IMR-90 (cell line): ENCODE measurements at regions of chr1 and their contacts with region 1.

Region 1: GRCh38 chr1:86965012-86965826 is 50.8 kb downstream of the HS2ST1 start:
- DNase-seq: peak; percentile 54
- ATAC-seq: peak; percentile 85
- H3K4me3 ChIP-seq: no peak overlapping the region
- H3K27ac ChIP-seq: no peak overlapping the region
- H3K4me1 ChIP-seq: no peaks in the 10 kb centered on the region
- H3K27me3 ChIP-seq: no peaks in the 10 kb centered on the region
- CTCF ChIP-seq: peak; percentile 84
- POLR2A ChIP-seq: no peak
- RAD21 ChIP-seq: peak; percentile 82

Region 2: GRCh38 chr1:86395771-86396497 is 569.3 kb before region 1 on chr1 and contains the start of gene ODF2L:
- CTCF ChIA-PET with region 1: no interaction called
- POLR2A ChIA-PET with region 1: no interaction called
- dilution Hi-C with region 1: no loop called
- in situ Hi-C with region 1: loop called (anchors 25 kb)
- intact Hi-C with region 1: no loop called
- DNase-seq: peak; percentile 74
- ATAC-seq: peak; percentile 100
- H3K4me3 ChIP-seq: peak within 1 kb of the TSS; percentile 84
- H3K27ac ChIP-seq: peak within 1 kb of the TSS; percentile 88
- H3K4me1 ChIP-seq: peaks cover 2% of the 10 kb centered on the region; the same call in 1 of the 2 replicates
- H3K27me3 ChIP-seq: peaks cover 4% of the 10 kb centered on the region; the same call in 1 of the 2 replicates
- CTCF ChIP-seq: no peak
- POLR2A ChIP-seq: peak; percentile 78
- RAD21 ChIP-seq: no peak
- total RNA-seq, gene ODF2L: 10.4 and 20.0 TPM in 2 replicates

Region 3: DNA sequence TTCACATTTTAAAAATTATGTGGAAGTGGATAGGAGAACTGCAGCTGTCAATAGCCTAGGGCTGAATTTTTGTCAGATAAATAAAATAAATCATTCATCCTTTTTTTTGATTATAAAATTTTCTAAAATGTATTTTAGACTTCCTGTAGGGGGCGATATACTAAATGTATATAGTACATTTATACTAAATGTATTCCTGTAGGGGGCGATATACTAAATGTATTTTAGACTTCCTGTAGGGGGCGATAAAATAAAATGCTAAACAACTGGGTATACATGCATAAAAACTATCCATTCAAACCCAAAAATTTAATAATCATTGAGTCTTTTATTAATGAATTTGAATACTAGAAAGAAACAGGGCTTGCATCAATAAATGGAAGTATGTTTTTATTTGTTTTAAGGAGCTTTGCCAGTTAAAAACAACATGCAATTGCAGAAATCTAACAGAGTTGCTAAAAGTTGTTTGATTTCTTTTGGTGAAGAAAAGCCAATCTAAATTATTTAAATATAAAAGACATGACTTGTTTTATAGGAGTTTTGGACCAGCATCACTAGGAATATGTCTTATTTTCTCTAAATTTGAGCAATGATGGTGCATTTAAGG is 465.1 kb before region 1 on chr1:
- CTCF ChIA-PET with region 1: no interaction called
- POLR2A ChIA-PET with region 1: no interaction called
- dilution Hi-C with region 1: no loop called
- in situ Hi-C with region 1: no loop called
- intact Hi-C with region 1: loop called (anchors 10 kb)
- DNase-seq: peak; percentile 32
- ATAC-seq: no peak
- H3K4me3 ChIP-seq: no peak overlapping the region
- H3K27ac ChIP-seq: no peak overlapping the region
- H3K4me1 ChIP-seq: peaks cover 2% of the 10 kb centered on the region
- H3K27me3 ChIP-seq: peaks cover 10% of the 10 kb centered on the region
- CTCF ChIP-seq: peak; percentile 100; the same call in 1 of the 2 replicates
- POLR2A ChIP-seq: no peak
- RAD21 ChIP-seq: peak; percentile 24; the same call in 1 of the 2 replicates

Region 4: GRCh38 chr1:86779308-86780191 is 185.7 kb before region 1 on chr1:
- CTCF ChIA-PET with region 1: no interaction called
- POLR2A ChIA-PET with region 1: no interaction called
- dilution Hi-C with region 1: no loop called
- in situ Hi-C with region 1: no loop called
- intact Hi-C with region 1: loop called (anchors 2 kb)
- DNase-seq: peak; percentile 92
- ATAC-seq: peak; percentile 48
- H3K4me3 ChIP-seq: no peak overlapping the region
- H3K27ac ChIP-seq: peak overlapping the region; percentile 6; the same call in 1 of the 2 replicates
- H3K4me1 ChIP-seq: peaks cover 19% of the 10 kb centered on the region
- H3K27me3 ChIP-seq: no peaks in the 10 kb centered on the region
- CTCF ChIP-seq: no peak
- POLR2A ChIP-seq: no peak
- RAD21 ChIP-seq: no peak

Region 5: DNA sequence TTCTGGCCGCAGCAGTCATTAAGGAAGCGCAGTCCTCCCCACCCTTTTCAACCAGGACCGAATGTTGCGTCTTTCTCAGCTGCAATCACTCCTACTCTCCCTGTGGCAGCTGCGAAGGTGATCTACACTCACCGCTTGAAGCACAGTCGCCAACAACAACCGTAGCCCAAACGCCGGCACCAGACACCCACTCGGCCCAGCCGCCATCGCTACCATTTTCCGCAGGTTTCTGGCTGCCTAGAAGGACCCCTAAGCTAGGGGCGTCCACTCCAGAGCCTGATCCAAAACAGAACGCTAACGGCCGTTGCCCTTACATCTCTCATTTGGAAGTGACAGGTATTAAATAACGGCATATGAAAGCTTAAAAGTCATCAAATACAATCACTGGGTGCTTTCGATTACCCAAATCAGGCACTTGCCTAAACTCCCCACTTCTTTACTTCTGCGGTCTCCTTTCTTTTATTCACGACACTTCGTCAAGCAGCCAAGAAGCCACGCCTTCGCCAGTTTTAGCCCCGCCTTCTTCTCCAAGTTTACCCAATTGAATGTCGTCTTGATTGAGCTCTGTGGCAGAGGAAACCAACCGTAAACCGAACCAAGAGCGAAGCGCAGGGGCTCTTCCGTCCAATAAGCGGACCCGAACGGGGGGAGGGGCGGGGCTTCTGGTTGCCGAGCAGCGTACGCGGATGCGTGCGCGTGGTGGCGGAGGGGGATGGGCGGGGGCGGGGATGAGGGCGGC is 51.2 kb before region 1 on chr1 and contains the start of gene SELENOF:
- CTCF ChIA-PET with region 1: interaction called, 3 read pairs
- POLR2A ChIA-PET with region 1: no interaction called
- dilution Hi-C with region 1: no loop called
- in situ Hi-C with region 1: no loop called
- intact Hi-C with region 1: loop called (anchors 2 kb)
- DNase-seq: peak; percentile 100
- ATAC-seq: peak; percentile 94
- H3K4me3 ChIP-seq: peak within 1 kb of the TSS; percentile 85
- H3K27ac ChIP-seq: peak within 1 kb of the TSS; percentile 79
- H3K4me1 ChIP-seq: peaks cover 4% of the 10 kb centered on the region; the same call in 1 of the 2 replicates
- H3K27me3 ChIP-seq: no peaks in the 10 kb centered on the region
- CTCF ChIP-seq: no peak
- POLR2A ChIP-seq: peak; percentile 83
- RAD21 ChIP-seq: no peak
- total RNA-seq, gene SELENOF: 60.0 and 128 TPM in 2 replicates

Region 6: DNA sequence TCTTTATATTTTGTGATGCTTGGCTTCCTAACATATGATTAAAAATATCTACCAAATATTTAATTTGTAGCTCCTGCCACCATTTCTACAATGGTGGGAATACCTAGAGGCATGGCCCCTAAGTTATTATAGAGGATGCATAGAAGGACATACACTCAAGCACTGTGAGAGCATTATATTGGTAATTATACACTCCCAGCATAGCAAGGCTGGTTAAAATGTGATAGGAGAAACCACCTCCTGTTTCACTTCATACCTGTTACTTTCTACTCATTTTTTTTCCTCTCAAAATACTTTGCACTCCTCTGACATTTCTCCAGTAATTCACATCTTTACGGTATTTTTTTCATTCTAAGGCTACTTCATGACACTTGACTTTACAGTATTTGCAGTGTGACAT is 42.1 kb after region 1 on chr1:
- CTCF ChIA-PET with region 1: no interaction called
- POLR2A ChIA-PET with region 1: no interaction called
- dilution Hi-C with region 1: no loop called
- in situ Hi-C with region 1: no loop called
- intact Hi-C with region 1: no loop called
- DNase-seq: no peak
- ATAC-seq: no peak
- H3K4me3 ChIP-seq: no peak overlapping the region
- H3K27ac ChIP-seq: no peak overlapping the region
- H3K4me1 ChIP-seq: no peaks in the 10 kb centered on the region
- H3K27me3 ChIP-seq: no peaks in the 10 kb centered on the region
- CTCF ChIP-seq: no peak
- POLR2A ChIP-seq: no peak
- RAD21 ChIP-seq: no peak

Region 7: DNA sequence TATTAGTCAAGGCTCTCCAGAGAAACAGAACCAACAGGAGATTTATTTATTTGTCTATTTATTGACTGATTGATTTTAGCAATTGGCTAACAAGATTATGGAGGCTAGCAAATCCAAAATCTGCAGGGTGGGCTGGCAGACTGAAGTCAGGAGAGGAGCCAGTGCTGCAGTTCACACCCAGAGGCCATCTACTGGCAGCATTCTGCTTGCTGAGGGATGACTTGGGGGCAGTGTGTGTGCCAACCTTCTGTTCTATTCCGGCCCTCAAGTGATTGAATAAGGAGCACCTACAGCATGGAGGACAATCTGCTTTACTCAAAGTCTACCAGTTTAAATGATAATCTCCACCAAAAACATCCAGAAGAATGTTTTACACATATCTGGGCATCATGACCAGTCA is 301.1 kb after region 1 on chr1:
- CTCF ChIA-PET with region 1: no interaction called
- POLR2A ChIA-PET with region 1: no interaction called
- dilution Hi-C with region 1: no loop called
- in situ Hi-C with region 1: no loop called
- intact Hi-C with region 1: no loop called
- DNase-seq: no peak
- ATAC-seq: no peak
- H3K4me3 ChIP-seq: no peak overlapping the region
- H3K27ac ChIP-seq: no peak overlapping the region
- H3K4me1 ChIP-seq: no peaks in the 10 kb centered on the region
- H3K27me3 ChIP-seq: no peaks in the 10 kb centered on the region; the same call in none of the 2 replicates
- CTCF ChIP-seq: no peak
- POLR2A ChIP-seq: no peak
- RAD21 ChIP-seq: no peak

Region 8: GRCh38 chr1:87501738-87502137 is 536.5 kb after region 1 on chr1:
- CTCF ChIA-PET with region 1: no interaction called
- POLR2A ChIA-PET with region 1: no interaction called
- dilution Hi-C with region 1: no loop called
- in situ Hi-C with region 1: no loop called
- intact Hi-C with region 1: no loop called
- DNase-seq: peak; percentile 8
- ATAC-seq: no peak
- H3K4me3 ChIP-seq: no peak overlapping the region
- H3K27ac ChIP-seq: no peak overlapping the region
- H3K4me1 ChIP-seq: no peaks in the 10 kb centered on the region
- H3K27me3 ChIP-seq: no peaks in the 10 kb centered on the region
- CTCF ChIP-seq: no peak
- POLR2A ChIP-seq: no peak
- RAD21 ChIP-seq: no peak